ENCODE measurements at regions of chr13 and their contacts with region 1.

Region 1: DNA sequence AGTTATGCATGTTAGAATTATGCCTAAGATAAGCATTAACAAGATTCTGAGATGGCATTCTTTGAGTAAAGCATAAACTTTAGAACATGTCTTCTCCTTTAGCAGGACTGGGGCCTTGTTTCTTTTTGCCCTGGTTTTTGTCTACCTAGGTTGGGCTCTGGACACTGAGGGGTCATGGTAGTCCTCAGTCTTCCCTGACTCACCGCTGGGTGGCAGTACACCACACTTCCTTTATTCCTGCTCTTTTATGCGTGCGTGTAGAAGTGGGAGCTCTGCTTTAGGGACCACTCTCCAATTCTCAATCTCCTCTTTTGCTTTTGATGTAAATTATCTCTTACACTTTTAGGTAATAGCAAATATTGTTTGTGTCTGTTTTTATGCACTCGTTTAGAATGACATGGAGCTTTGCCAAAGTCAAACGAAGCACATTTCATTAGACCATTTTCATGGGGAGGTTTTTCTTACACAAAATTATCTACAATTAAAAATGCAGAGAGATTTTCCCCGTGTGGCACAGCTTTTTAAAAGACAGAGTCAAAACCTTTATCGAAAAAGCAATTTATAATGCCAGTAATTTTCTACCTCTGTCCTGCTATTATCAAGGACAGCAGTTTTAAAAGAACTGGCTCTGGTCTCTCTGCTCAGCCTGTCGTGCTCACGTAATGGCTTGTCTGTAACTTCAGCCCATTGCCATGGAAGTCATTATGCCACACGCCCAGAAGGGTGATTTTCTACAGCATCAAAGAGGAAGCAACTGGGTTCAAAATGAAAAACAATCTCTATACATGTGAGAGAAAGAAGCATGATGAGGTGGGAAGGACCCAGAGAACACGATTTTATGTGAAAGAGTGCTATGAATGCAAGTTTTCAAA is 413.9 kb downstream of the COG6 start:
- DNase-seq: peak; percentile 83
- H3K4me3 Mint-ChIP-seq: no peak overlapping the region
- H3K27ac Mint-ChIP-seq: peak overlapping the region; percentile 42
- H3K4me1 Mint-ChIP-seq: peaks cover 14% of the 10 kb centered on the region
- H3K27me3 Mint-ChIP-seq: no peaks in the 10 kb centered on the region
- CTCF ChIP-seq: peak; percentile 72

Region 2: DNA sequence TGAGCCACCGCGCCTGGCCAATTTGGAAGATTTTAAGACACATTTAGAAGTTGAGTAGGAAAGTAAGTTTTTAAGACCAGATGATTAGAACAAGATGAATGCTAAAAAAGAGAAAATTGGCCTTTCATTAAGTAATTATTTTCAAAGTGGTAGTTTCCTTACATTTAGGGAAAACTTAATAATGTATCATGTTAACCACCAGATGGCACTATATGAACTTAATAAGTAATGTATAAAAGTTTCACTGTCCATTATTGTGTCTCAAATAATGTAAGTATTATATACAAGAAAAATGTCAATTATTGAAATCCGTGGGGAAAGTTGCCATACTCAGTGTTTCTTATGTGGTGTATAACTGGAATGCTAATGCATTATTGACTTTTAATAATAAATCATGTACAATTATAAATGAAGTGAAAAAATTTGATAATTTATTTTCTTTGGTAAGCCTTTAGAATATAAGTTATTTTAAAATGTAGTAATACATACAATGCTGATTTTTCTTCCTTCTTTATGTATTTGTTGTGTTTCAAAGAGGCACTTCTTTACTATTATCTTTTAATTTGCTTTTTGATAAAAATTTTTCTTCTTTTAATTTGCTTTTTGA is 384.8 kb before region 1 on chr13:
- CTCF ChIA-PET with region 1: interaction called, 3 read pairs
- POLR2A ChIA-PET with region 1: no interaction called
- intact Hi-C with region 1: loop called (anchors 10 kb)
- DNase-seq: peak; percentile 39
- H3K4me3 Mint-ChIP-seq: no peak overlapping the region
- H3K27ac Mint-ChIP-seq: no peak overlapping the region
- H3K4me1 Mint-ChIP-seq: no peaks in the 10 kb centered on the region
- H3K27me3 Mint-ChIP-seq: no peaks in the 10 kb centered on the region
- CTCF ChIP-seq: peak; percentile 18

Region 3: DNA sequence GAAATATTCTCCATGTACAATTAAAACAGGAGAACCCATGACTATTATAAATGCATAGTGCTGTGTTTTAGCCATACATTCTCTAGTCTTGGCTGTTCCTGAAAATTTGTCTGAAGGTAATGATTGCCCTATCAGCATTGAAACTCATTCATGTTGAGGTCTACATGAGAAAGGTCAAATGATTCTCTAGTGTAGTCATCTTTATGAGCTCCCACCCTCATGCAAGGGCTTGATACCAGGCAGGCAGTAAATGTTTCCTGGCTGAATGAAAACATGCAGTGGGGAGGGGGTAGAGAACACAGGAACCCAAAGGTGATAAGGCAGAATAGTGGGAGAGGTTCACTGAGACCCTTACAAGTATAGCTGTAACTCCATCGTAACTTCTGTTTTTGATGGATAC is 10.3 kb after region 1 on chr13:
- CTCF ChIA-PET with region 1: interaction called, 14 read pairs
- POLR2A ChIA-PET with region 1: interaction called, 4 read pairs
- intact Hi-C with region 1: no loop called
- DNase-seq: no peak
- H3K4me3 Mint-ChIP-seq: no peak overlapping the region
- H3K27ac Mint-ChIP-seq: no peak overlapping the region
- H3K4me1 Mint-ChIP-seq: peaks cover 25% of the 10 kb centered on the region
- H3K27me3 Mint-ChIP-seq: no peaks in the 10 kb centered on the region
- CTCF ChIP-seq: no peak

Region 4: DNA sequence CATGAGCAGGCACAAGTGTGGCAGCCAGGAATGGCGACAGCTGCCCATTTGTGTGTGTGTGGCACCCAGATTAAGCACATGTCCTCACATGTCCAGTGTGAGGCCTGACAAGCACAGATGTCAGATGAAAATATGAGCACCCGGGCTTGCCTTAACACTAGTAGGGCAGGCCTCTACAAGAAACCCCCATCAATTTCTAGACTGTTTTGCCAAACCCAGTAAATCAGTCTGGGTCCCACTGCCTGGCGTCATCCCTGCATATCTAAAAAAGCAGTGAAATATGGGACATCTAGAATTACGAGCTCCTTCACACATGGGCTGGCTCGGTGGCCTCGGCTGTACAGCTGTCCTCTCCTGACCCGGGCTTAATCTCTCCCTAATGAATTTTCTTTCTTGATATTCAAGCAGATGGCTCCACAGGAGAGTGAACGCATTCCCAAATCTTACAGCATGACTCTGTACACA is 164.4 kb after region 1 on chr13:
- CTCF ChIA-PET with region 1: interaction called, 4 read pairs
- POLR2A ChIA-PET with region 1: interaction called, 3 read pairs
- intact Hi-C with region 1: loop called (anchors 1 kb)
- DNase-seq: peak; percentile 24
- H3K4me3 Mint-ChIP-seq: no peak overlapping the region
- H3K27ac Mint-ChIP-seq: no peak overlapping the region
- H3K4me1 Mint-ChIP-seq: peaks cover 66% of the 10 kb centered on the region
- H3K27me3 Mint-ChIP-seq: no peaks in the 10 kb centered on the region
- CTCF ChIP-seq: no peak

Region 5: GRCh38 chr13:40503966-40504591 is 434.7 kb after region 1 on chr13:
- CTCF ChIA-PET with region 1: no interaction called
- POLR2A ChIA-PET with region 1: no interaction called
- intact Hi-C with region 1: no loop called
- DNase-seq: peak; percentile 54
- H3K4me3 Mint-ChIP-seq: no peak overlapping the region
- H3K27ac Mint-ChIP-seq: peak overlapping the region; percentile 18
- H3K4me1 Mint-ChIP-seq: peaks cover 6% of the 10 kb centered on the region
- H3K27me3 Mint-ChIP-seq: no peaks in the 10 kb centered on the region
- CTCF ChIP-seq: no peak

Region 6: DNA sequence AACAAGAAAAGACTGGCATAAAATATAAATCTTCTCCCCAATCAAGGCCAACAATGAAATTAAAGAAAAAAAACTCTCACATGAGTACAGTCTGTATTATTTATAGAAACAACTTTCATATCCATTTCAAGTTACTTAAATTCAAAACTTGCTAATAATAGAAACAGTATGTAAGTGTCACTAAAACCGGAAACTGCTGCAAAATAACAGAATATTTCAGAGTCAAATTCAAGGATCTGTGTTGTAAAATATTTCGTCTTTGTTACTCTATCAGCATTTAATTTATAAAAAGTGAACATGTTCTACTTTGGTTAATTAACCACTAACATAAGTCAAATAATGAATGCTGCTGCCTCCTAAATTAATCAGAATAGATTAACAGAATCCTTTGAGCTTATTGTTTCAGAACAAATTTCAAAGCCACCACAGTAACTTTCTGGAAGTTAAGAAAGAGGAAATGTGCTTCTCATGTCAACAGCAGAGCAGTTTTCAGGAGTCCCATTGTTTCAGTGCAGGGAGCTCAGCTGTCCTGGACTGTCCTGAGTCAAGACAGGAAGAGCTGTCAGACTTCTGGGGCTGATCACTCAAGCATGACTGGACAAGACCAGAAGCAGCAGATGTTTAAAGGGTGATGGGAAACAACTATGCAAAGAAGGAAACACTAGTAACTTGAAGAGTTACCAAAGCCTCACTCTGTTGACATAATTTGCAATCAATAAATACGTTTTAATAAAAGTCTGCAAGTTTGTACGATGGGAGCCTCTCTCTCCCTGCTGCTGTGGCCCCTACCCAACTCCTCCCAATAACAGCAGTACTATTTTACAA is 520.1 kb after region 1 on chr13:
- CTCF ChIA-PET with region 1: no interaction called
- POLR2A ChIA-PET with region 1: no interaction called
- intact Hi-C with region 1: loop called (anchors 10 kb)
- DNase-seq: peak; percentile 77
- H3K4me3 Mint-ChIP-seq: no peak overlapping the region
- H3K27ac Mint-ChIP-seq: peak overlapping the region; percentile 69
- H3K4me1 Mint-ChIP-seq: peaks cover 72% of the 10 kb centered on the region
- H3K27me3 Mint-ChIP-seq: no peaks in the 10 kb centered on the region
- CTCF ChIP-seq: no peak